Activated B cell treated with CpG ODN at 0.5 μM for 24 hours (primary cell): ENCODE measurements at regions of chr11 and their contacts with region 1.

Region 1: DNA sequence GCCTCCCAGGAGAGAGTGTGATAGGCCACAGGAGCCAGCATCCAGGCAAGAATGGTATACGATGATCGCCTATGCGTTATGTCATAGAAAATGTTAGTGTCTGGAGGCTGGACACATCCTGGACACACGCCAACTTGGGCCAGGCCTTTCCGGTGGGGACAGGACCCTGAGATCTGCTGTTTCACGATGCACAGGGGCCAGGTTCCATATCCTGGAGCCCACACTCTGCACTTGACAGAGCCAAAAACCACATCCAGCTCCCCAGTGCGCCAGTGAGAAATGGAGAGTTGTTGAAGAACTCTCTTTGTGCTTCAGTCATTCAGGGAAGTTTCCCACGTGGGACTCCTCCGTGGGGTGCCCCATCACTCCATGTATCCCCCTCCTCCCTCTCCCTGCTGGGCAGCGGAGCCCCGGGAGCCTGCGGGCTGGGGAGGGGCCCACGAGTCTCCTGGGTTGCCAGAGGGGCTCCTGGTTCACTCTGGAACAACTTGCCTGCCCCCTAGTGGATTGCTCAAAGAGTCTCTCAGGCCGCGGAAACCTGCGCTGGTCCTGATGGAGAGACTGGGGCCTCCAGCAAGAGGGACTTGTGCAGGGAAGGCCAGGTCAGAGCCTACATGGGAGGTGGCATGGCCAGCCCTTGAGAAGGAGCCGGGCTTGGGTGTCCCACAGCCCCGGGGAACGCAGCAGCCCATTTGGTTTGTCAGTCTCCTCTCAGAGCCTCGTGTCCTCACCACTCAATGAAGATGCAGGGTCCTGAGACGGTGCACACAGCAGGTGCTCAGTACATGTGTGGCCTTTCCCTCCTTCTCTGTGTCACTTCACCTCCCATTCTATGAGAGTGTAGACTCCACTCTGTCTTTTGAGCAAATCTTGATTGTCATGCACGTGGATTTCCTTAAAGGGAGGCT is 10.2 kb upstream of the LRRC32 start:
- DNase-seq: peak; percentile 62
- ATAC-seq: peak; percentile 77
- H3K4me3 Mint-ChIP-seq: no peak overlapping the region
- H3K27ac Mint-ChIP-seq: no peak overlapping the region
- H3K4me1 Mint-ChIP-seq: peaks cover 50% of the 10 kb centered on the region
- H3K27me3 Mint-ChIP-seq: peaks cover 37% of the 10 kb centered on the region
- CTCF ChIP-seq: no peak

Region 2: DNA sequence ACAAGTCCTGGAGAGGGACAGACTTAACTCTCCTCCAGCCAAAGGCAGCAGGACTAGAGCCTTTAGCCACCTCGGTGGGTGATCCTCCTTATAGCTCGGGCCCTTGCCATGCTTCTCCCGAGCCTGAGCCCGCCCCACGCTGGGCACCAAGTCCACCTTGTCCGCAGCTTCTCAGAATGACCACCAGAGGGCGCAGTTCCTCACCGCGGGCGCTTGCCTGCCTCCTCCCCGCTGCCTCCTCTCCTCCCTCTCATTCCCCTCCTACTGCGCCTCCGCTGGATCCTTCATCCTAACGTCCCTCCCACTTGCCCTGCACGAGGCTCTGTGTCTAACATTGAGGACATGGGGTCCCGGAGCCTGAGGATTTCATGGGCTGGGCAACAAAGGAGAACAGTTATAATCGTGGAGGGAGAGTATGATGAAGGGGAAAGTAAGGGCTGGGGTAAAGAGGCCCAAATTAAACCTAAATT is 974.5 kb before region 1 on chr11:
- CTCF ChIA-PET with region 1: no interaction called
- POLR2A ChIA-PET with region 1: no interaction called
- intact Hi-C with region 1: no loop called
- DNase-seq: peak; percentile 51
- ATAC-seq: peak; percentile 92
- H3K4me3 Mint-ChIP-seq: no peak overlapping the region
- H3K27ac Mint-ChIP-seq: no peak overlapping the region
- H3K4me1 Mint-ChIP-seq: peaks cover 11% of the 10 kb centered on the region
- H3K27me3 Mint-ChIP-seq: peaks cover 4% of the 10 kb centered on the region
- CTCF ChIP-seq: peak; percentile 33

Region 3: GRCh38 chr11:76318744-76319384 is 361.9 kb before region 1 on chr11:
- CTCF ChIA-PET with region 1: no interaction called
- POLR2A ChIA-PET with region 1: no interaction called
- intact Hi-C with region 1: loop called (anchors 5 kb)
- DNase-seq: peak; percentile 73
- ATAC-seq: peak; percentile 97
- H3K4me3 Mint-ChIP-seq: no peak overlapping the region
- H3K27ac Mint-ChIP-seq: no peak overlapping the region
- H3K4me1 Mint-ChIP-seq: peaks cover 2% of the 10 kb centered on the region
- H3K27me3 Mint-ChIP-seq: peaks cover 40% of the 10 kb centered on the region
- CTCF ChIP-seq: no peak

Region 4: DNA sequence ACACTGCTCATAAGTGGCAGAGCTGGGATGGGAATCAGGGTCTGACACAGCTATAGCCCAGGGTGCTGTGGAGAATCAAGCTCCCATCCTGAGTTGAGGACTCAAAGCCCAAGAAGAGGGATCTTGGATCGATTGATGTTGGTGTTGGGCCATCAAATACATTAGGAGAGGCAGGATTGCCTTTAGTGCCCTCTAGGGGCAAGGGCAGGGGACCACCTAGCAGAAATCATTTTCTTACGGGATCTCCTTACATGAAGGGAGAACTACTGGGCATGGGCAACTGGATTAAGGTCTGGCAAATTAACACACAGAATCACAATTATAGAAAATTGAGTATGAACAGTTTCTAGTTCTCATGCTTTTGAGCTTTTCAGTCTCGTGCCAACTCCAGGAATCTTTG is 260.9 kb before region 1 on chr11:
- CTCF ChIA-PET with region 1: no interaction called
- POLR2A ChIA-PET with region 1: no interaction called
- intact Hi-C with region 1: loop called (anchors 1 kb)
- DNase-seq: no peak
- ATAC-seq: no peak
- H3K4me3 Mint-ChIP-seq: no peak overlapping the region
- H3K27ac Mint-ChIP-seq: no peak overlapping the region
- H3K4me1 Mint-ChIP-seq: peaks cover 4% of the 10 kb centered on the region
- H3K27me3 Mint-ChIP-seq: no peaks in the 10 kb centered on the region
- CTCF ChIP-seq: no peak

Region 5: GRCh38 chr11:76551400-76551799 is 129.4 kb before region 1 on chr11:
- CTCF ChIA-PET with region 1: interaction called, 4 read pairs
- POLR2A ChIA-PET with region 1: no interaction called
- intact Hi-C with region 1: loop called (anchors 1 kb)
- DNase-seq: no peak
- ATAC-seq: no peak
- H3K4me3 Mint-ChIP-seq: no peak overlapping the region
- H3K27ac Mint-ChIP-seq: no peak overlapping the region
- H3K4me1 Mint-ChIP-seq: peaks cover 2% of the 10 kb centered on the region
- H3K27me3 Mint-ChIP-seq: no peaks in the 10 kb centered on the region
- CTCF ChIP-seq: no peak

Region 6: DNA sequence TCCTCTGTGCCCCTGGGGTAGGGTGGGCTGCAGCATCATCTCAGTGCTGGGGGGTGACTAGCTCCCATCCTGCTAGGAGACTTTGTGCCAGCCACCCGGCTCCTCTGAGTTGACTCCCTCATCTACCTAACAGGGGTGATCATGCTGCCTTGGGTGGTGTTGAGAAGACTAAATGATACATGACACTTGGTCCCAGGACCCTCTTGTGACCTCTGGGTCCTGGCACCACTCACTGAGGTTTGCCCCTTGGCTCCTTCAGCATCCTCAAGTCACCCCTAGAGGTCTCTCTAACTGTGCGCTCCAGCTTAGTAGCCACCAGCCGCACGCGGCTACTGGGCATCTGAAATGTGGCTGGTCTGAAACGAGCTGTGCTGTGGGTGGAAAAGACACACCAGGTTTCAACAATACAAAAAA is 82.3 kb before region 1 on chr11:
- CTCF ChIA-PET with region 1: interaction called, 116 read pairs
- POLR2A ChIA-PET with region 1: interaction called, 4 read pairs
- intact Hi-C with region 1: loop called (anchors 1 kb)
- DNase-seq: no peak
- ATAC-seq: peak; percentile 92
- H3K4me3 Mint-ChIP-seq: peak overlapping the region; percentile 1
- H3K27ac Mint-ChIP-seq: no peak overlapping the region
- H3K4me1 Mint-ChIP-seq: peaks cover 16% of the 10 kb centered on the region
- H3K27me3 Mint-ChIP-seq: peaks cover 19% of the 10 kb centered on the region
- CTCF ChIP-seq: no peak

Region 7: DNA sequence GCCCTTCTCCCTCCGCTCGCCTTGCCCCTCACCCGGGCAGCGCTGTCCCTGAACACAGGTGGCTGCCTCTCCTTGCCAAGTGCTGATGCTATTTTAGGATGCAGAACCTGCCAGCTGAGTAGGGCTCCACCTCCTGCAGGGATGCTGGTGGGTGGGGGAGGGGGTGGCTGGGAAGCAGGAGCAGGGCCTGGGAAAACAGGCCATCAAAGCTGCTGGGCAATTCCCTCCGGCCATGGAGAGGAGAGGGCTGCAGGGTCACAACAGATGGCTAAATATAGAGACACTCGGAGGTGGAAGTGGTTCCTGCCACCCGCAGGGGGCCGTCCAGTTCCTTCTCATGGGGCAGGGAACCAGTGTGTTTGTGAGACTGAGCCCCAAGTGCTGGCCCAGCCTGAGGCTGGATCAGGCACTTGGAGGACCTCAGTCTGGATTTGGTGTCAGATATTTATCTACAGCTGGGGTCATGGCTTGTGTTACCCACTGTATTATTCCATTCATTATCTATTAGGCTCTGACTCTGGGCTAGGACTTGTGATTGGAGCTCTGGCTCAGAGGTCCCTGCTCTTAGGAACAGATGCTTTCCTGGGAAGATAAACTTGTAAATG is 69.8 kb before region 1 on chr11:
- CTCF ChIA-PET with region 1: interaction called, 13 read pairs
- POLR2A ChIA-PET with region 1: no interaction called
- intact Hi-C with region 1: no loop called
- DNase-seq: no peak
- ATAC-seq: no peak
- H3K4me3 Mint-ChIP-seq: no peak overlapping the region
- H3K27ac Mint-ChIP-seq: no peak overlapping the region
- H3K4me1 Mint-ChIP-seq: peaks cover 32% of the 10 kb centered on the region
- H3K27me3 Mint-ChIP-seq: peaks cover 27% of the 10 kb centered on the region
- CTCF ChIP-seq: no peak

Region 8: GRCh38 chr11:77386178-77386577 is 705.4 kb after region 1 on chr11:
- CTCF ChIA-PET with region 1: no interaction called
- POLR2A ChIA-PET with region 1: no interaction called
- intact Hi-C with region 1: no loop called
- DNase-seq: no peak
- ATAC-seq: no peak
- H3K4me3 Mint-ChIP-seq: no peak overlapping the region
- H3K27ac Mint-ChIP-seq: no peak overlapping the region
- H3K4me1 Mint-ChIP-seq: no peaks in the 10 kb centered on the region
- H3K27me3 Mint-ChIP-seq: no peaks in the 10 kb centered on the region
- CTCF ChIP-seq: no peak